CD4-positive, alpha-beta T cell (primary cell): ENCODE measurements at regions of chr9 and their contacts with region 1.

Region 1: DNA sequence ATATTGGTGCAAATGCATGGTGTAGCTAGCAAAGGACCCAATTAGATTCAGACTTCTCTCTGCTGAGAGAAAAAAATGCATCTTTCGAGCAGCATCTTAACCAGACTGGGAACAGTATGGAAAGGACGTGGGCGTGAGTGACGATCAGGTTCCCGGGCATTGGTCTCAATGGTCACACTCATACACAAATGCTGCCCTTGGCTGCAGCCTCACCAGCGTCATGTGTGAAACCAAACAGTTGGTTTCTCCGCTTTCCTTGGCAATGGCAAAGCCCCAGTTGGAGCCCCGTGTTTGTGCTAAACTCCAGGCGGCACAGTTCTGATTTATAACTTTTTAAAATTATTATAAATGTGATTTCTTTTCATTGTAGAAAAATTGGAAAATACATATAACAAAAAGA is 237.8 kb downstream of the SEC61B start:
- DNase-seq: no peak
- ATAC-seq: no peak
- H3K4me3 ChIP-seq: no peak overlapping the region
- H3K4me3 Mint-ChIP-seq: no peak overlapping the region
- H3K27ac ChIP-seq: no peak overlapping the region
- H3K27ac Mint-ChIP-seq: no peak overlapping the region
- H3K4me1 ChIP-seq: no peaks in the 10 kb centered on the region
- H3K4me1 Mint-ChIP-seq: no peaks in the 10 kb centered on the region
- H3K27me3 ChIP-seq: no peaks in the 10 kb centered on the region
- H3K27me3 Mint-ChIP-seq: peaks cover 5% of the 10 kb centered on the region
- CTCF ChIP-seq: no peak

Region 2: DNA sequence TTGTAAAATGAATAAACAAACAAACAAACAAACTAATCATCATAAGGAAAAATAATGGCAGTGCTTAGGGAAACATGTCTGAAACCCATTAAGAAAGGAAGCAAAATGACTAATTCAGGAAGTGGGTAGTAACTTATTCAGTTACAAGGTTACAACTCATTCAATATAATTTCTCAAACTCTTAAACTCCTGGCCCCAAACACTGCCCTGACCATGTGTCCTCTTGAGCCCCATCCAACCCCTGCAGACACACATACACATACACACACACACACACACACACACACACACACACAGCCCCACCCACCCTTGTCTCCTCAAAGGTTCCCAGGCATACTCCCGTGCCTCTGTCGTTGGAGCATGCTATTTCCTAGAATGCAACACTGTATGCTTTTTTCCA is 43.9 kb before region 1 on chr9:
- CTCF ChIA-PET with region 1: no interaction called
- POLR2A ChIA-PET with region 1: no interaction called
- intact Hi-C with region 1: loop called in 1 of 2 experiments (anchors 5 kb)
- DNase-seq: no peak
- ATAC-seq: no peak
- H3K4me3 ChIP-seq: no peak overlapping the region
- H3K4me3 Mint-ChIP-seq: no peak overlapping the region
- H3K27ac ChIP-seq: no peak overlapping the region
- H3K27ac Mint-ChIP-seq: no peak overlapping the region
- H3K4me1 ChIP-seq: no peaks in the 10 kb centered on the region
- H3K4me1 Mint-ChIP-seq: no peaks in the 10 kb centered on the region
- H3K27me3 ChIP-seq: peaks cover 0 to 5% of the 10 kb centered on the region in 2 experiments
- H3K27me3 Mint-ChIP-seq: no peaks in the 10 kb centered on the region
- CTCF ChIP-seq: no peak